ENCODE measurements at regions of chrX and their contacts with region 1.

Region 1: GRCh38 chrX:12946838-12947544 is 27.9 kb upstream of the TMSB4X start:
- DNase-seq: peak in 8 of 9 donors; percentile 67 to 89 (median 74)
- ATAC-seq: peak; percentile 64
- H3K4me3 ChIP-seq: peak overlapping the region; percentile 30
- H3K4me3 Mint-ChIP-seq: peak overlapping the region; percentile 16 to 84 (median 72)
- H3K27ac ChIP-seq: peak overlapping the region; percentile 80
- H3K27ac Mint-ChIP-seq: peak overlapping the region; percentile 91 to 98 (median 96)
- H3K4me1 ChIP-seq: peaks cover 39 to 41% of the 10 kb centered on the region in 2 donors
- H3K4me1 Mint-ChIP-seq: peaks cover 8 to 60% (median 53%) of the 10 kb centered on the region in 7 donors
- H3K27me3 ChIP-seq: no peaks in the 10 kb centered on the region
- H3K27me3 Mint-ChIP-seq: no peaks in the 10 kb centered on the region

Region 2: DNA sequence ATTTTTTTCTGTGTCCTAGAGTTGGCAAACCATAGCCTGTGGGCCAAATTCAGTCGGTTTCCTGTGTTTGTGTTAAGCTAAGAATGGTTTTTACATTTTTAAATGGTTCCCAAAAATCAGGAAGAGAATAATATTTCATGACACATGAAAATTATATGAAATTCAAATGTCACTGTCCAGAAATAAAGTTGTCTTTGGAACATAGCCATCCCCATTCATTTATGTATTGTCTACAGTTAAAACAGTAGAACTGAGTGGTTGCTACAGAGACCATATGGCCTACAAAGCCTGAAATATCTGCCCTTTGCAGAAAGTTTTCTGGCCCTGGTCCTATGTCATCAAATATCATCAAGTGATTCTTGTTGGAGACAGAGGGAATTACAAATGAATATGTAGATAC is 793.2 kb before region 1 on chrX:
- CTCF ChIA-PET with region 1: no interaction called
- POLR2A ChIA-PET with region 1: no interaction called
- intact Hi-C with region 1: no loop called
- DNase-seq: no peak
- ATAC-seq: no peak
- H3K4me3 ChIP-seq: no peak overlapping the region
- H3K4me3 Mint-ChIP-seq: no peak overlapping the region
- H3K27ac ChIP-seq: no peak overlapping the region
- H3K27ac Mint-ChIP-seq: no peak overlapping the region
- H3K4me1 ChIP-seq: no peaks in the 10 kb centered on the region
- H3K4me1 Mint-ChIP-seq: no peaks in the 10 kb centered on the region
- H3K27me3 ChIP-seq: no peaks in the 10 kb centered on the region
- H3K27me3 Mint-ChIP-seq: no peaks in the 10 kb centered on the region

Region 3: DNA sequence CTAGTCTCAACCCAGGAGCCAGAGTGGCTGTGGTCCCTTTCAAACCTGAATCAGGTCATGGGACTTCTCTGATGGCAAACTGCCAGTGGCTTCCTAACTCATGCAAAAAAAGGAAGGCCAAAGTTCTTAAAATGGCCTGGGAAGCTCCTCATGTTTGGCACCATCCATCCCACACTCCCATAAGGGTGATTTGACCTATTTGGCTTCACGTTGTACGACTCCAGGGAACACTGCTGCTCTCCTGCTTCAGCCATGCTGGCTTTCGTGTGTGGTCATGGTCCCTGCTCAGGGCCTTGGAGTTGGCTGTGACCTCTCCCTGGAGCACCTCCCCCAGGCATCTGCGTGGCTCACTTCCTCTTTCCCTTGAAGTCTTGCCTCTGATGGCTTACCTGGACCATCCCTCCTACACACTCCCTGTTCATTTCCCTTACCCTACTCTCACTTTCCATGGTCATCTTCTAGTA is 15.1 kb after region 1 on chrX:
- CTCF ChIA-PET with region 1: interaction called, 102 read pairs
- POLR2A ChIA-PET with region 1: interaction called, 1,267 read pairs
- intact Hi-C with region 1: no loop called
- DNase-seq: no peak
- ATAC-seq: no peak
- H3K4me3 ChIP-seq: no peak overlapping the region
- H3K4me3 Mint-ChIP-seq: peak overlapping the region in 6 of 10 donors; percentile 12 to 68 (median 50)
- H3K27ac ChIP-seq: no peak overlapping the region
- H3K27ac Mint-ChIP-seq: peak overlapping the region in 6 of 9 donors; percentile 39 to 93 (median 72)
- H3K4me1 ChIP-seq: peaks cover 53 to 54% of the 10 kb centered on the region in 2 donors
- H3K4me1 Mint-ChIP-seq: peaks cover 24 to 72% (median 62%) of the 10 kb centered on the region in 7 donors
- H3K27me3 ChIP-seq: no peaks in the 10 kb centered on the region
- H3K27me3 Mint-ChIP-seq: no peaks in the 10 kb centered on the region

Region 4: GRCh38 chrX:13000301-13000811 is 53.4 kb after region 1 on chrX:
- CTCF ChIA-PET with region 1: interaction called, 3 read pairs
- POLR2A ChIA-PET with region 1: interaction called, 13 read pairs
- intact Hi-C with region 1: loop called (anchors 1 kb)
- DNase-seq: peak in 7 of 9 donors; percentile 46 to 74 (median 68)
- ATAC-seq: peak; percentile 65
- H3K4me3 ChIP-seq: peak overlapping the region; percentile 42
- H3K4me3 Mint-ChIP-seq: peak overlapping the region; percentile 70 to 86 (median 84)
- H3K27ac ChIP-seq: peak overlapping the region; percentile 77
- H3K27ac Mint-ChIP-seq: peak overlapping the region; percentile 83 to 98 (median 95)
- H3K4me1 ChIP-seq: peaks cover 66 to 68% of the 10 kb centered on the region in 2 donors
- H3K4me1 Mint-ChIP-seq: peaks cover 27 to 88% (median 74%) of the 10 kb centered on the region in 7 donors
- H3K27me3 ChIP-seq: no peaks in the 10 kb centered on the region
- H3K27me3 Mint-ChIP-seq: no peaks in the 10 kb centered on the region

Region 5: GRCh38 chrX:13051529-13052172 is 104.7 kb after region 1 on chrX:
- CTCF ChIA-PET with region 1: interaction called, 6 read pairs
- POLR2A ChIA-PET with region 1: interaction called, 12 read pairs
- intact Hi-C with region 1: no loop called
- DNase-seq: peak in 7 of 9 donors; percentile 69 to 87 (median 79)
- ATAC-seq: peak; percentile 84
- H3K4me3 ChIP-seq: peak overlapping the region; percentile 25
- H3K4me3 Mint-ChIP-seq: peak overlapping the region; percentile 46 to 80 (median 58)
- H3K27ac ChIP-seq: peak overlapping the region; percentile 74
- H3K27ac Mint-ChIP-seq: peak overlapping the region; percentile 93 to 96 (median 95)
- H3K4me1 ChIP-seq: peaks cover 39 to 85% of the 10 kb centered on the region in 2 donors
- H3K4me1 Mint-ChIP-seq: peaks cover 14 to 93% (median 81%) of the 10 kb centered on the region in 7 donors
- H3K27me3 ChIP-seq: no peaks in the 10 kb centered on the region
- H3K27me3 Mint-ChIP-seq: no peaks in the 10 kb centered on the region

Region 6: GRCh38 chrX:13190073-13190472 is 243.1 kb after region 1 on chrX:
- CTCF ChIA-PET with region 1: no interaction called
- POLR2A ChIA-PET with region 1: no interaction called
- intact Hi-C with region 1: no loop called
- DNase-seq: no peak
- ATAC-seq: no peak
- H3K4me3 ChIP-seq: no peak overlapping the region
- H3K4me3 Mint-ChIP-seq: no peak overlapping the region
- H3K27ac ChIP-seq: no peak overlapping the region
- H3K27ac Mint-ChIP-seq: no peak overlapping the region
- H3K4me1 ChIP-seq: no peaks in the 10 kb centered on the region
- H3K4me1 Mint-ChIP-seq: peaks cover 0 to 12% (median 5%) of the 10 kb centered on the region in 7 donors
- H3K27me3 ChIP-seq: no peaks in the 10 kb centered on the region
- H3K27me3 Mint-ChIP-seq: no peaks in the 10 kb centered on the region

Region 7: DNA sequence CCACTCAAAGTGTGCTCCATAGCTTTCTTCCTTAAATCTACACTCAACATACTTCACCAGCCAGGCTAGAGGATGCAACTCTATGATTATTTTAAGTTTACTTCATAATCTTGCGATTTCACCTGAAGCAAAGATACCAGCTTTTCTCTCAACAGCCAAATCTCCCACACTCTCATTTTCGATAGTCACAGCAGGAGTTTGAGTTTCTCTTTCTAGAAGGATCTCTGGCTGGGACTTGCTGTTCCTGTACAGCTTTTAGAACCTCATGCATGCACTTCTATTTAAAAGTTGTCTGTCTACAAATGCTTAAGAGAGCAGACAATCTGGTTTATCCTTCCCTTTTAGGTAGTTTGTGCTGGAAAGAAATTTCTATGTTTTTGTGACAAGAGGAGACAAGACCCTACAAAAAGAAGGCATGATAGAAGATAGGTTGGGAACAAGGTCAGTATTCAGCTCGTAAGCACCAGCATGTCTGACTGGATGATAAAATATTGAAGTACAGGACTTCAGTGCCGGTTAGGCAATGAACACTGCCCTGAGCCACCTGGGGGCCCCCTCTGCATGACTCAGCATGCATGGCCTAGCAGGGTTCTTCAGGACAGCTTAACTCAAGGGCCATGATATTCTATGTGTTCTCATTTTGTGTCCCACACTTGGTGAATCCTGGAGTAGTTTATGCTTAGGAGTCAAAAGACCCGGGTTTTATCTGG is 307.2 kb after region 1 on chrX:
- CTCF ChIA-PET with region 1: interaction called, 7 read pairs
- POLR2A ChIA-PET with region 1: no interaction called
- intact Hi-C with region 1: loop called in 1 of 2 experiments (anchors 1 kb)
- DNase-seq: no peak
- ATAC-seq: no peak
- H3K4me3 ChIP-seq: no peak overlapping the region
- H3K4me3 Mint-ChIP-seq: peak overlapping the region in 1 of 10 donors; percentile 22
- H3K27ac ChIP-seq: no peak overlapping the region
- H3K27ac Mint-ChIP-seq: peak overlapping the region in 1 of 9 donors; percentile 47
- H3K4me1 ChIP-seq: peaks cover 0 to 10% of the 10 kb centered on the region in 2 donors
- H3K4me1 Mint-ChIP-seq: peaks cover 0 to 45% (median 20%) of the 10 kb centered on the region in 7 donors
- H3K27me3 ChIP-seq: no peaks in the 10 kb centered on the region
- H3K27me3 Mint-ChIP-seq: no peaks in the 10 kb centered on the region

Region 8: DNA sequence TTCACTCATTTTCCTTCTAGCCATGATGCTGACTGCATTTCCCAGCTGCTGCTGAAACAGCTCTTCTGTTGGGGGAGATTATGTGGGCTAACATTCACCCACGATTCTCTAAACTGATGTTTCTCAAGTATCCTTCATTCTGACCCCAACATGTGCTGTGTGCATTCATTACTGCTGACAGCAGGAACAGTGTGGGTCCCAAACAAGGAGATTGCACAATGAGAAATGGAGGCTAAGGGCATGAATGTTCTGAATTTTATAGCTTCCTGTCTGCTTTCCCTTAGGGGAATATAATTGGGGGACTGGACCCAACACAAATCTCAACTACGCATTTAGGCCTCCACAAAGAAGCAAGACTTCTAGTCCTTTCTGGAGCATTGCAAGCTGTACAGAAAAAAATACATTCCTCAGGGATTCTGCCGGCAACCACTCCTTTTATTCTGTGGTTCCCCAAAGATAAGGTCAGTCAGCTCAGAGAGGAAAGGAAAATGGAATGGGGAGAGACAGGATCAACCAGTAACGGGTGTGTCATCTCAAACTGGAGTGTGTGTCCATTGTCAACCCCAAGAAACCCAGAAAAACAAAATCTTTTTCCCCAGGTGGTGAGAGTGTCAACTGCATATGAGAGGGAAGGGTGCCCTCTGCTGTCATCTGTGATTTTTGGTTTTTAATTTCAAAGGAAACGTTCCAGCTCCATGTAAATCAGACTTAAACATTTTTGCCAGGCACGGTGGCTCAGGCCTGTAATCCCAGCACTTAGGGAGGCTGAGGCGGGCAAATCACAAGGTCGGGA is 540.9 kb after region 1 on chrX:
- CTCF ChIA-PET with region 1: interaction called, 66 read pairs
- POLR2A ChIA-PET with region 1: interaction called, 54 read pairs
- intact Hi-C with region 1: loop called (anchors 1 kb)
- DNase-seq: peak in 8 of 9 donors; percentile 22 to 73 (median 52)
- ATAC-seq: peak; percentile 79
- H3K4me3 ChIP-seq: no peak overlapping the region
- H3K4me3 Mint-ChIP-seq: peak overlapping the region in 2 of 10 donors; percentile 11 to 48
- H3K27ac ChIP-seq: no peak overlapping the region
- H3K27ac Mint-ChIP-seq: peak overlapping the region in 8 of 9 donors; percentile 23 to 87 (median 64)
- H3K4me1 ChIP-seq: peaks cover 11 to 27% of the 10 kb centered on the region in 2 donors
- H3K4me1 Mint-ChIP-seq: peaks cover 4 to 39% (median 27%) of the 10 kb centered on the region in 7 donors
- H3K27me3 ChIP-seq: no peaks in the 10 kb centered on the region
- H3K27me3 Mint-ChIP-seq: no peaks in the 10 kb centered on the region

Region 9: DNA sequence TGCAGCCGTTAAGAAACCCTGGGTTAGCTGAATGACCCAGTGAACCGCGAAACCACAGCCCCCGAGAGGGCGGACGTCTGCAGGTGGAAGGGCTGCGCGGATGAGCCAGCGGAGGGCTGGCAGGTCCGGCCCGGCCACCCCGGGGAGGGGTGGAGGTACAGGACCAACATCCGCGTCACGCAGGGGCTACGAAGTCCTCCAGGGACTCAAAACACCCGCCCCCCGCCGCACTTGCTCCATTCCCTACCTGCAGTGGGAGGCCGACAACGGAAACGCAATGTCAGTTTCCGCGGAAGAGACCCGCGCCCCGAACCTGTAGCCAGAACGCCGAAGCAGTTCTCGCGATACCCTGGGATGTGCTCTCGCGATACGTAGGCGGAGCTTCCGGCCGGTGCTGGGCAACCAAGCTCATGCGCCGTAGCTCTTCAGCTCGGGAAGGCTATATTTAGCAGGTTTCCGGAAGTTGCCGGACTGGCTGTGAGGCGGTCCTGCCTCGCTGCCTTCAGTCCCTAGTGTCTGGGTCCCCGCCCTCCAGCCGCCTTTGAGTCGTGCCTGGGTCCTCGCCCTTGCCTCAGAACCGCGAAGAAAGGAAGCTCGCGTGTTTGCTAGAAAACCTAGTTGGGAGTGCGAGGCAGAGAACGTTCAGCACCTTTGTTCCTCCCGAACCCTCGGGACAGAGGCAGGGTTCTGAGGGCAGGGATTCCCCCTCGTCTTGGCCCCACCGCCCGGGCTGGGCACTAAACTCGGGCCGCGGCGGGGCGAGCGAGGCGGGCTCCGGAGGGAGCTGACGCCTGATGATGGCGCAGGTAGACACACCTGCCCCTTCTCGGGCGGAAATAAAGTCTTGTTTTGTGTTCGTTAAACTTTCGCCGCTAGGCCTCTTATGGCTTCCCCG is 787.5 kb after region 1 on chrX and contains the starts of genes OFD1 and TRAPPC2:
- CTCF ChIA-PET with region 1: no interaction called
- POLR2A ChIA-PET with region 1: interaction called, 5 read pairs
- intact Hi-C with region 1: loop called (anchors 10 kb)
- DNase-seq: peak; percentile 76 to 92 (median 87)
- ATAC-seq: peak; percentile 94
- H3K4me3 ChIP-seq: peak within 1 kb of the TSS; percentile 85
- H3K4me3 Mint-ChIP-seq: peak within 1 kb of the TSS; percentile 82 to 99 (median 94)
- H3K27ac ChIP-seq: peak within 1 kb of the TSS; percentile 99
- H3K27ac Mint-ChIP-seq: peak within 1 kb of the TSS; percentile 95 to 99 (median 97)
- H3K4me1 ChIP-seq: peaks cover 12 to 20% of the 10 kb centered on the region in 2 donors
- H3K4me1 Mint-ChIP-seq: peaks cover 21 to 66% (median 58%) of the 10 kb centered on the region in 7 donors
- H3K27me3 ChIP-seq: no peaks in the 10 kb centered on the region
- H3K27me3 Mint-ChIP-seq: no peaks in the 10 kb centered on the region
- total RNA-seq, gene OFD1: 30.4 to 142 (median 72.5) TPM
- total RNA-seq, gene TRAPPC2: 20.7 to 31.1 (median 23.5) TPM